Right ventricle myocardium superior (tissue), 1 donor: ENCODE measurements at regions of chr10 and their contacts with region 1.

Region 1: GRCh38 chr10:49115015-49115795 is at the start of gene VSTM4:
- DNase-seq: peak; percentile 72
- ATAC-seq: peak; percentile 60
- total RNA-seq, gene VSTM4: 22.4 TPM

Region 2: DNA sequence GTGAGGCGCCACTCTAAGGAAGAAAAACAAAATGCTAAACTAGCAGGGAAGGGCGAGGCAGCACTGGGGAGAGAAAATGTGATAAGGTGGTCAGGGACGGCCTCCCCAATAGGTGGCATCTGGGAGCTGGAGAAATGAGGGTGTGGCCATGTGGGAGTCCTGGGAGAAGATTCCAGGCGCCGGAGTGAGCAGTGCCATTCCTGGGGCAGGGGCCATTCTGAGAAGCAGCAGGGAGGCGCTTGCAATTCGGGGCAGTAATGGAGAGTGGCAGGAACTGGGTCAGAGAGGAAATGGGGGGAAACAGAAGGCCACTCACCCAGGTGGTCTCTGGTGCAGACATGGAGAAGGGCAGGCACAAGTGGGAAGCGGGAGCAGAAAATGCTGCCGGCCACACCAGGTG is 113.8 kb before region 1 on chr10:
- intact Hi-C with region 1: loop called (anchors 10 kb)
- DNase-seq: no peak
- ATAC-seq: peak; percentile 71